CD14-positive monocyte (primary cell): ENCODE measurements at regions of chr7 and their contacts with region 1.

Region 1: GRCh38 chr7:100358027-100358865 is at the start of gene PILRB:
- DNase-seq: no peak
- H3K4me3 ChIP-seq: peak within 1 kb of the TSS in 1 of 3 experiments; percentile 24
- H3K4me3 Mint-ChIP-seq: no peak within 1 kb of the TSS
- H3K27ac ChIP-seq: peak within 1 kb of the TSS in 1 of 2 donors; percentile 64
- H3K27ac Mint-ChIP-seq: peak within 1 kb of the TSS in 5 of 7 donors; percentile 53 to 83 (median 79)
- H3K4me1 ChIP-seq: peaks cover 19 to 25% of the 10 kb centered on the region in 2 donors
- H3K4me1 Mint-ChIP-seq: peaks cover 28% of the 10 kb centered on the region
- H3K27me3 ChIP-seq: no peaks in the 10 kb centered on the region
- H3K27me3 Mint-ChIP-seq: peaks cover 0 to 3% (median 2%) of the 10 kb centered on the region in 3 donors
- CTCF ChIP-seq: no peak
- polyA plus RNA-seq, gene PILRB: 1.7 to 62.6 (median 2.2) TPM

Region 2: GRCh38 chr7:100065452-100066186 is 292.6 kb before region 1 on chr7:
- intact Hi-C with region 1: no loop called
- DNase-seq: no peak
- H3K4me3 ChIP-seq: no peak overlapping the region
- H3K4me3 Mint-ChIP-seq: no peak overlapping the region
- H3K27ac ChIP-seq: no peak overlapping the region
- H3K27ac Mint-ChIP-seq: peak overlapping the region in 1 of 7 donors; percentile 40
- H3K4me1 ChIP-seq: no peaks in the 10 kb centered on the region
- H3K4me1 Mint-ChIP-seq: no peaks in the 10 kb centered on the region
- H3K27me3 ChIP-seq: no peaks in the 10 kb centered on the region
- H3K27me3 Mint-ChIP-seq: peaks cover 0 to 3% (median 1%) of the 10 kb centered on the region in 3 donors
- CTCF ChIP-seq: no peak

Region 3: GRCh38 chr7:100148559-100149350 is 209.5 kb before region 1 on chr7 and contains the start of gene LAMTOR4:
- intact Hi-C with region 1: loop called in 1 of 2 experiments (anchors 10 kb)
- DNase-seq: peak; percentile 98 to 99 (median 99)
- H3K4me3 ChIP-seq: peak within 1 kb of the TSS; percentile 83 to 100 (median 97)
- H3K4me3 Mint-ChIP-seq: peak within 1 kb of the TSS; percentile 94 to 95
- H3K27ac ChIP-seq: peak within 1 kb of the TSS; percentile 75 to 97
- H3K27ac Mint-ChIP-seq: peak within 1 kb of the TSS; percentile 92 to 98 (median 95)
- H3K4me1 ChIP-seq: peaks cover 55 to 65% of the 10 kb centered on the region in 2 donors
- H3K4me1 Mint-ChIP-seq: peaks cover 59% of the 10 kb centered on the region
- H3K27me3 ChIP-seq: no peaks in the 10 kb centered on the region
- H3K27me3 Mint-ChIP-seq: no peaks in the 10 kb centered on the region
- CTCF ChIP-seq: no peak
- polyA plus RNA-seq, gene LAMTOR4: 533 to 754 (median 621) TPM

Region 4: GRCh38 chr7:100407285-100408180 is 49.3 kb after region 1 on chr7:
- intact Hi-C with region 1: loop called in 1 of 2 experiments (anchors 5 kb)
- DNase-seq: peak; percentile 65 to 80 (median 76)
- H3K4me3 ChIP-seq: no peak overlapping the region
- H3K4me3 Mint-ChIP-seq: no peak overlapping the region
- H3K27ac ChIP-seq: no peak overlapping the region
- H3K27ac Mint-ChIP-seq: peak overlapping the region in 3 of 7 donors; percentile 16 to 70 (median 26)
- H3K4me1 ChIP-seq: peaks cover 0 to 12% of the 10 kb centered on the region in 2 donors
- H3K4me1 Mint-ChIP-seq: peaks cover 19% of the 10 kb centered on the region
- H3K27me3 ChIP-seq: no peaks in the 10 kb centered on the region
- H3K27me3 Mint-ChIP-seq: no peaks in the 10 kb centered on the region
- CTCF ChIP-seq: peak; percentile 78

Region 5: GRCh38 chr7:100444311-100445278 is 86.3 kb after region 1 on chr7:
- intact Hi-C with region 1: no loop called
- DNase-seq: peak; percentile 81 to 92 (median 85)
- H3K4me3 ChIP-seq: no peak overlapping the region
- H3K4me3 Mint-ChIP-seq: peak overlapping the region; percentile 12 to 33
- H3K27ac ChIP-seq: peak overlapping the region; percentile 25 to 53
- H3K27ac Mint-ChIP-seq: peak overlapping the region; percentile 76 to 95 (median 89)
- H3K4me1 ChIP-seq: peaks cover 23 to 31% of the 10 kb centered on the region in 2 donors
- H3K4me1 Mint-ChIP-seq: peaks cover 37% of the 10 kb centered on the region
- H3K27me3 ChIP-seq: no peaks in the 10 kb centered on the region
- H3K27me3 Mint-ChIP-seq: peaks cover 0 to 1% (median 0%) of the 10 kb centered on the region in 3 donors
- CTCF ChIP-seq: no peak